GM13977 (cell line): ENCODE measurements at regions of chr14 and their contacts with region 1.

Region 1: GRCh38 chr14:39015360-39015961 is 87.6 kb downstream of the SEC23A start:
- DNase-seq: peak; percentile 76
- CTCF ChIP-seq: peak; percentile 84

Region 2: GRCh38 chr14:38721822-38722431 is 293.5 kb before region 1 on chr14:
- in situ Hi-C with region 1: loop called (anchors 25 kb)
- DNase-seq: peak; percentile 34
- CTCF ChIP-seq: peak; percentile 82